ENCODE measurements at regions of chr10 and their contacts with region 1.

Region 1: DNA sequence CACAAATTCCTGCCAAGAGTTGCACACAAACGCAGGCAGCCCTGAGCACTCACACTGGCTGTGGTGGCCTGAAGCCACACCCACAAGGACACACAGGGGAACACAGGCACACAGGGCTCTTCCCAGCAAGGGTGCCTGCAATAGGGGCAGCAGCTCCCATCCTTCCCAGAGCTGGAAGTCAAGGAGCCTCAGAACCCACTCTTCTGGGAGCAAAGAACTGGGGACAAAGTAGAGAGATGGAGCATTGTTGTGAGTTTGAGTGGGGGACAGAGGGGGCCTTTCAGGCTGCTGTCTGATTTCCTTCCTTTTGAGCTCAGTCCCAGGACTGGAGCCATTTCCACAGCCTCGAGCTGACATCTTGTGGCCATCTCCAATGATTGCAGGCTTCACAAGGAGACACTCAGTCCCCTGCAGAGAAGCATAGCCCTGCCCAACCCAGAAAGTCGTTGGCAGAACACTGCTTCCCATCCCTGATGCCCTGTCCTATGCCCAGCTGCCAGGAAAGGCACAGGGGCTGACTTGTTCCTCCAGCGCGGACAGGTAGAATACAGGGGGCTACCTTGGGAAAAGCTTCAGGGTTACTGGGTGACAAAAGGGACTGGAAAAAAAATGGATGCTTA is 34.4 kb upstream of the SLF2 start:
- H3K4me3 ChIP-seq: no peak overlapping the region
- H3K27ac ChIP-seq: no peak overlapping the region
- H3K4me1 ChIP-seq: no peaks in the 10 kb centered on the region
- CTCF ChIP-seq: peak; percentile 88

Region 2: GRCh38 chr10:100481462-100482081 is 396.8 kb before region 1 on chr10:
- CTCF ChIA-PET with region 1: interaction called, 14 read pairs
- POLR2A ChIA-PET with region 1: no interaction called
- H3K4me3 ChIP-seq: peak overlapping the region; percentile 40
- H3K27ac ChIP-seq: no peak overlapping the region; the same call in 1 of the 2 replicates
- H3K4me1 ChIP-seq: peaks cover 8% of the 10 kb centered on the region
- CTCF ChIP-seq: peak; percentile 29; the same call in 1 of the 2 replicates

Region 3: DNA sequence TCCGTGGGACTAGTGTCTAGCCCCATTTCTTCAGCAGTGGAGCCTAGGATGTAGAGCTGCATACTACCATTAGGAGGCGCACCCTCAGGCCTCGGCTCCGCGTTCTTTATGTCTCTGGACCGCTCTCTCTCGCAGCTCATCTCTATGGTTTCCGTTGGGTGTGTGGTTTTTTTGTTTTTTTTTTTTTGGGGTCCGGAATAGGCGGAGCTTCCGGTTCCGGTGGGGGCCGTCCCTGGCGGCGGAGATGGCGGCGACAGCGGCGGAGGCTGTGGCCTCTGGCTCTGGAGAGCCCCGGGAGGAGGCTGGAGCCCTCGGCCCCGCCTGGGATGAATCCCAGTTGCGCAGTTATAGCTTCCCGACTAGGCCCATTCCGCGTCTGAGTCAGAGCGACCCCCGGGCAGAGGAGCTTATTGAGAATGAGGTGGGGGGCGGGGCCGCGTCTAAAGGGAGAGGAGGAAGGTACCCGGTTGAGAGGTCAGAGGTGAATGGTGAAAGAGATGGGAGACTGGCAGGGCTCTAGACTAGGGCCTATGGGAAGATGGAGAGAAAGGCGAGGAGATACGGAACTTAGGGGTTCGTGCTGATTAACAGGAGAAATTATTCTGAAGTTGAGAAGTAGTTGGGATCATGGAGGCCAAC is 342.6 kb before region 1 on chr10 and contains the start of gene HIF1AN:
- CTCF ChIA-PET with region 1: interaction called, 5 read pairs
- POLR2A ChIA-PET with region 1: interaction called, 10 read pairs
- H3K4me3 ChIP-seq: peak within 1 kb of the TSS; percentile 79
- H3K27ac ChIP-seq: peak within 1 kb of the TSS; percentile 21; the same call in 1 of the 2 replicates
- H3K4me1 ChIP-seq: peaks cover 15% of the 10 kb centered on the region
- CTCF ChIP-seq: peak; percentile 99

Region 4: GRCh38 chr10:100562008-100562711 is 316.2 kb before region 1 on chr10:
- CTCF ChIA-PET with region 1: interaction called, 197 read pairs
- POLR2A ChIA-PET with region 1: interaction called, 3 read pairs
- H3K4me3 ChIP-seq: no peak overlapping the region
- H3K27ac ChIP-seq: no peak overlapping the region
- H3K4me1 ChIP-seq: no peaks in the 10 kb centered on the region
- CTCF ChIP-seq: peak; percentile 96

Region 5: DNA sequence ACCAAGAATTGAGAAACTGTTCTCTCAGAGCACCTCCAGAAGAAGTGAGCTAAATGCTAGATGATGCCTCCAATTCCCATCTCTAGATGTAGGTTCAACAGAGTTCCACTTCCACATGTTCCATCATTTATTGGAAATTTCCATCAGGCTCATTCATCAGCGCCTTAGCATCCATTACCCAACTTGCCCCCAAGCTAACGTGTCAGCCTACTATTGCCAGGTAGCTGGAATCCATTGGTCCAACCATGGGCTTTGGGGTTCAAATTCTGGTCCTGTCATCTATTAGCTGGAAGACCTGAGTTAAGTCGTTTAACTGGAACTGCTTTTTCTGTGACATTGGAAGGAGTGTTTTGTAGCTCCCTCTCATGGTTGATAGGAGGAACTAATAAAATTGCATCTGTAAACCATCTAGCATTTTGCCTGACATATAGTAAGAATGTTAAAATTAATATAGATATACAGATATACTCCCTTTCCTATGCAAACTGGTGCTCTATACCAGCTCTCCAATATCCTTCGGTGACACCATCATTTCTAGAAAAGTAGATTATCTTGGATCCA is 10.5 kb after region 1 on chr10:
- CTCF ChIA-PET with region 1: interaction called, 25 read pairs
- POLR2A ChIA-PET with region 1: no interaction called
- H3K4me3 ChIP-seq: no peak overlapping the region
- H3K27ac ChIP-seq: no peak overlapping the region
- H3K4me1 ChIP-seq: no peaks in the 10 kb centered on the region
- CTCF ChIP-seq: no peak

Region 6: DNA sequence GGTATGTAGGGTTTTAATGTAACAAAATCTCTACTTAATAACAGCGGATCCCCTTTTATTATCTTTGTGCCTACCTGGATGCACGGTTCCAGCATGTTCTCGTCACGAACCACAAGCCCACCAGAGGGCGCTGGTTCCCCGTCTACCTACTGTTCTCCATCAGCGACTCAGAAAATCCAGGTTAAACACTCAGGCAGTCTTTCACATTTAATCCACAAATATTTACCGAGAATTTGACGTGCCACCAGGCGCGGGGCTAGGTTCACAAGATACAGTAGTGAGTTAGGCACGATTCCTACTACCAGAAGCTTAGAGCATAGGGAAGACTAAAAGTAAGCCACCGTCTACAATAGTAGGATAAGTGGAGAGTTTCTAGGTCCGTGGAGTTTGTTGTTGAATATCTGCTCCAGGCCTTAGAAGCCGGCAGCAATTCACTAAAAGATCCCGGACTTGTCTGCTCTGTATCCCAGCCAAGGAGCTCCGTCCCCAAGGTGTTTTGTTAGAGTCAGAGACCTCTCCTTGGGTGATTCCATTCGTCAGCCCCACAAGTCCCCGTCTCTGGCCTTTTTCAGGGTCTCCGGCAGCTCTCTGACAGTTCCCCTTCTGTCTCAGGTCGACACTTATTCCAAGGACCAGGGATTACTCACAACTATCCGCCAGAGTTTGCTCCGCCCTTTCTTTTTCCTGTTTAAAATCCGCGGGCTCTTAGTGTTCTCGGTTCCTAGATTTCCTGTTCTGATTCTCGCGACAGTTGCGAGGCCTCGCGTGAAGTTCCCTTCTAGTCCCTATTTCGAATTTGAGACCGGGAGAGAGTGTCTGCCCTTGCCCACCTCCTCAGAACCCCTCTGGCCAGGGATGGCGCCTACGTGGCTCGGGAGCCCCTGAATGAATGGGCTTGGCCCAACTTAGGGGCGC is 181.9 kb after region 1 on chr10:
- CTCF ChIA-PET with region 1: no interaction called
- POLR2A ChIA-PET with region 1: no interaction called
- H3K4me3 ChIP-seq: peak overlapping the region; percentile 91
- H3K27ac ChIP-seq: peak overlapping the region; percentile 97
- H3K4me1 ChIP-seq: peaks cover 18% of the 10 kb centered on the region
- CTCF ChIP-seq: peak; percentile 75